Transverse colon (tissue), 4 donors: ENCODE measurements at regions of chr21 and their contacts with region 1.

Region 1: GRCh38 chr21:36028127-36029069 is 31.9 kb downstream of the SETD4 start:
- DNase-seq: peak; percentile 77
- H3K4me3 ChIP-seq: no peak overlapping the region
- H3K27ac ChIP-seq: no peak overlapping the region
- H3K4me1 ChIP-seq: peaks cover 0 to 3% (median 0%) of the 10 kb centered on the region in 4 donors
- H3K27me3 ChIP-seq: no peaks in the 10 kb centered on the region
- CTCF ChIP-seq: peak; percentile 82 to 96 (median 94)
- EP300 ChIP-seq: no peak
- POLR2A ChIP-seq: no peak

Region 2: DNA sequence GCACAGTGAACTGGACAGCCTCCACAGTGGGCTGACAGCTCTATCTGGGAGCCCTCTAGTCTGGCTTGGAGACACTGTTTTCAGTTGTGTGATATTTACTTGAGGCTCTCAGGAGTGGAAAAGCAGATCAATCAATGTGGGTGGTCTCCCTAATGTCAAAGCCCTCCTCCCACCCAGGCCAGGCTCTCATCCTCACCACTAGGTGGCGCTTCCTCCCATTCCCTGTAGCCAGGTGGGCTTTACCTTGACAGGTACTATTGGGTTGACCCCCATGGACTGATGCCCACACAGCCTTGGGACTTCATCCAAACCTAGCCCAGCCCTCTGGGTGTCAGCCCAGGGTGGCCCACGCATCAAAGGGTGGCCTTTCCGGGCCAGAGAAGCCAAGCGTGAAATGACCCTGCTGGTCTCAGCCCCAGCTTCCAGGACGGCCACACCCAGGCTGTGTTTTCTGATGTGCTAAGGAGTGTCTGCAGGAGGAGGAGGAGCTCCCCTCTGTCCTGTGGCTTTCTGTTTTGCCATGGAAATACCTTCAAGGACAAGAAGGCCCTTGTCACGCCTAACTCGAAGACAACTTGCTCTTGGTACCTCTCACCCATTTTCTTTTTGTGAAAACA is 1305.6 kb before region 1 on chr21:
- in situ Hi-C with region 1: loop called in 1 of 4 experiments (anchors 25 kb)
- intact Hi-C with region 1: no loop called
- DNase-seq: no peak
- H3K4me3 ChIP-seq: no peak overlapping the region
- H3K27ac ChIP-seq: no peak overlapping the region
- H3K4me1 ChIP-seq: peaks cover 0 to 7% (median 3%) of the 10 kb centered on the region in 4 donors
- H3K27me3 ChIP-seq: no peaks in the 10 kb centered on the region
- CTCF ChIP-seq: peak in 4 of 5 experiments; percentile 28 to 40 (median 34)
- EP300 ChIP-seq: no peak
- POLR2A ChIP-seq: no peak

Region 3: DNA sequence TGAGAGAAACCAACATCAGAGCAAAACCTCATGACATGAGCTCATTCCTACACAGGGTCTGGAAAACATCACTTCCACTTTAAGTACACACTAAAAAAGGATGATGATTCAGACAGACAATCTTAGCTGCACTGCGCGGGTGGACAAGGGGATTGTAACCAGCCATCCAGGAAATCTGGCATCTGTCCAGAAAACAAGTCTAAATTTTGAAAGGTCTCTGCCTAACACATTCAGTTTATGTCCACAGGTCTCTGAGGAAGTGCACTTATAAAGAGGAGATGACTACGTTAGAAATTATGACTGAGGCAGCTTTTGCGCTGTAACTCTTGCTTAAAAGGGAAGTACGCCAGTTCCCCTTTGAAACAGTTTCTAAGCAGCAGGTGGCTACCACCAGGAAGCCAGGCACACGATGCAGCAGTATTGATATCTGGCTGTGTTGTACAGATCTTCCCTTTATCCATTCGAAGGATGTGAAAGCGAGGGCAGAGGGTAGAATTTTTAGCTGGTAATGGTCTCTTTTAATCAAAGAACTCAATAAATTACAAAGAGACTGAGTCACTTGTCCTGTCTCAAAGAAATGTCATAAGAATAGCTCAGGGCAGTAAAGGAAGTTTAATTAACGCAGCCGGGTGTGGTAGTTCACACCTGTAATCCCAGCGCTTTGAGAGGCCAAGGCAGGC is 96.0 kb before region 1 on chr21:
- in situ Hi-C with region 1: no loop called
- intact Hi-C with region 1: loop called (anchors 10 kb)
- DNase-seq: peak; percentile 37
- H3K4me3 ChIP-seq: no peak overlapping the region
- H3K27ac ChIP-seq: peak overlapping the region; percentile 20 to 71 (median 60)
- H3K4me1 ChIP-seq: peaks cover 0 to 21% (median 7%) of the 10 kb centered on the region in 4 donors
- H3K27me3 ChIP-seq: no peaks in the 10 kb centered on the region
- CTCF ChIP-seq: no peak
- EP300 ChIP-seq: no peak
- POLR2A ChIP-seq: no peak

Region 4: DNA sequence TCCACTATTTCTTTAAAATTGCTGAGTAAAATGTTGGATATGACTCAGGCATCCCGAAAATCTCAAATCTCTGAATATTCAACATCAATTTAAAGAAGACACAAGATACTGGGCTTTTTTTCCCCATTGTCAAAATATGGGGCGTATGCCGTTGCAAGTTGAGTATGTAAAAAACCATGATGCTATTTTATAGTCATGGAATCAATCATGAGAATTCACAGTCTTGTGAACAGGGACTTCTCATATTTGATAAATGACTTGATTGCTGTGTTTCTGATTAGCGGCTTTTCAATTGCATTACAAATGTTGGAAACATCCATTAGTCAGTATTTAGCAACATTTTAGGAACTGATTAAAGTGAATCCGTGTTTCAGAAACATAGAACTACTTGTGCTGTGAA is 13.4 kb before region 1 on chr21:
- in situ Hi-C with region 1: no loop called
- intact Hi-C with region 1: no loop called
- DNase-seq: no peak
- H3K4me3 ChIP-seq: no peak overlapping the region
- H3K27ac ChIP-seq: no peak overlapping the region
- H3K4me1 ChIP-seq: no peaks in the 10 kb centered on the region
- H3K27me3 ChIP-seq: peaks cover 7% of the 10 kb centered on the region
- CTCF ChIP-seq: no peak
- EP300 ChIP-seq: no peak
- POLR2A ChIP-seq: no peak